ENCODE measurements at regions of chr6 and their contacts with region 1.

Region 1: DNA sequence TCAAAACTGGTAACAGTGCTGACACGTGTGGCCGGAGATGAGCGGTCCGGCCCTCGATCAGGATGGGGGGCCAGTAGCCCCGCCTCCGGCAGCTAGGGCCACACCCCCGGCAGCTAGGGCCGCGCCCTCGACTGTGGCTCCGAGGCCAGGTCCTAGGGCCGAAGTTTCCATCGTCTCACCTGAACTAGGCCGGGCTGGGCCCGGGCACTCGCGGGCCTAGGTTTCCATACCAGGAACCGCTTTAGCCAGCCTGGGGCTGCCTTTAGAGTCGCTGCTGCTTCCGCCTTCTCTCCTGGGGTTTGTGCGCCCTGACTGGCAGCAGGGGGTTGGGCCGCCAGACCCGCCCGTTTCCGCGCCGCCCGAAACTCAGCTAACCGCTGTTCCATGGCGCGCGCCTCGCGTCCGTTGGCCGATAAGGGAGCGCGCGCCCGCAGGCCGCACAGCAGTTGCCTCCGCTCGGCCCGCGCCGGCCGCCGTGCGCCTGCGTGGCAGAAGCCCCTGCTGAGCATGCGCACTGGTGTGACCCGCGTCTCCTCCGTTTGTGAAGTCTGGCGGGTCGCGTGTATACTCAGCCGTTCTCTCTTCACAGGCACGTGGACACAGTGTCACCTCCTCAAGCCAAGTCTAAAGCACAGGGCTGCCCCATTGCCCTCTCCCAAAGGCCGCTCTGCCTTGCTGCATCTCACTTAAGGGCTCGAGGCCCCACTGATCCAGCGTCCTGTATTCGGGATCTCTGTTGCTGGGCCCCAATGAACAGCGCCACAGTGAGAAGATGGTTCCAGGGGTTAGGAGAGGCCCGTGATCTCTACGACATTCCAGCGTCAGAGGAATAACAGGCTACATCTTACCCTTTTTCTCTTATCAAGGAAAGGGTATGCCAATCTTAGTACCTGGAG is at the start of gene SAYSD1:
- DNase-seq: peak; percentile 80 to 98 (median 91)
- ATAC-seq: peak; percentile 79
- H3K4me3 ChIP-seq: peak within 1 kb of the TSS; percentile 64 to 71
- H3K4me3 Mint-ChIP-seq: peak within 1 kb of the TSS; percentile 96
- H3K27ac ChIP-seq: peak within 1 kb of the TSS; percentile 80 to 88
- H3K27ac Mint-ChIP-seq: peak within 1 kb of the TSS; percentile 98
- H3K4me1 ChIP-seq: peaks cover 45% of the 10 kb centered on the region
- H3K4me1 Mint-ChIP-seq: peaks cover 57% of the 10 kb centered on the region
- H3K27me3 ChIP-seq: no peaks in the 10 kb centered on the region
- H3K27me3 Mint-ChIP-seq: no peaks in the 10 kb centered on the region
- CTCF ChIP-seq: no peak
- total RNA-seq, gene SAYSD1: 21.8 to 24.3 TPM

Region 2: DNA sequence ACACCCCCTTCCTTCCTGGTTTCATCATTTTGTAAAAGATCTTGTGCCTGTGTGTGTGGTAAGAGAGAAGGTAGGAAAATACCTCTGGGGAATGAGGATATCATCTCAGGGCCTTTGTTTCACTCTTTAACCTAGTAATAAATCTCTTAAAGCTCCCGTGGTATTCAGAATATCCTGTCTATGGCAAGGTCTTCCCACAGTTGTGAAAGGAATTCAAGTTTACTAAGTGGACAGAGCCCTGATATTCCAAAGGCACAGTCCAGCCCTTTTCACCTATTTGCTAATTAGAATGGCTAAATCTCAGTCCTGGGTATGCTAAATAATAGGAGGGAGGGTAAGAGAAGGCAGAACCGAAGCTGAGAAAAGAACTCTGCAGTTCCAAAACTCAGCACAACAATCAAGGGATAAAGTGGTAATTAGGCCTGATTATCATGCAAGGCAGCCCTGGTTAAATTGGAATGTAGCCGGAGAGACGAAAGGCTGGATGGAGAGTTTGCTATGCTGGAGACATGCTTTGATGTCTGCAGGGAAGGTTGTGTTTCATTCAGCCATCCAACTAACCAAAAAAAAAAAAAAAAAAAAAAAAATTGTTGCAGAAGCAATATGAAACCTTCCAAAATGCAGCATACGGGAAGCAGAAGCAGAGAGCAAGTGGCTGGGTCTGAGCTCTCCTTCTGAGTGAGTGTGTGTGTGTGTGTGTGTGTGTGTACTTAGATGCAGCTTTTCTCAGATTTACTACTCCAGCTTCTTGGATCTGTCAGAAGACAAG is 1973.5 kb before region 1 on chr6:
- CTCF ChIA-PET with region 1: no interaction called
- POLR2A ChIA-PET with region 1: no interaction called
- intact Hi-C with region 1: no loop called
- DNase-seq: no peak
- ATAC-seq: no peak
- H3K4me3 ChIP-seq: no peak overlapping the region
- H3K4me3 Mint-ChIP-seq: no peak overlapping the region
- H3K27ac ChIP-seq: no peak overlapping the region
- H3K27ac Mint-ChIP-seq: peak overlapping the region; percentile 30
- H3K4me1 ChIP-seq: no peaks in the 10 kb centered on the region
- H3K4me1 Mint-ChIP-seq: peaks cover 11% of the 10 kb centered on the region
- H3K27me3 ChIP-seq: no peaks in the 10 kb centered on the region
- H3K27me3 Mint-ChIP-seq: no peaks in the 10 kb centered on the region
- CTCF ChIP-seq: no peak

Region 3: GRCh38 chr6:38702558-38703397 is 412.2 kb before region 1 on chr6 and contains the start of gene GLO1:
- CTCF ChIA-PET with region 1: no interaction called
- POLR2A ChIA-PET with region 1: no interaction called
- intact Hi-C with region 1: loop called (anchors 2 to 10 kb)
- DNase-seq: peak; percentile 91 to 98 (median 96)
- ATAC-seq: peak; percentile 99
- H3K4me3 ChIP-seq: peak within 1 kb of the TSS; percentile 64 to 88
- H3K4me3 Mint-ChIP-seq: peak within 1 kb of the TSS; percentile 83
- H3K27ac ChIP-seq: peak within 1 kb of the TSS; percentile 78 to 90
- H3K27ac Mint-ChIP-seq: peak within 1 kb of the TSS; percentile 92
- H3K4me1 ChIP-seq: no peaks in the 10 kb centered on the region
- H3K4me1 Mint-ChIP-seq: peaks cover 24% of the 10 kb centered on the region
- H3K27me3 ChIP-seq: no peaks in the 10 kb centered on the region
- H3K27me3 Mint-ChIP-seq: peaks cover 6% of the 10 kb centered on the region
- CTCF ChIP-seq: no peak
- total RNA-seq, gene GLO1: 23.1 to 23.9 TPM

Region 4: GRCh38 chr6:39225946-39226437 is 111.0 kb after region 1 on chr6:
- CTCF ChIA-PET with region 1: no interaction called
- POLR2A ChIA-PET with region 1: interaction called, 3 read pairs
- intact Hi-C with region 1: loop called in 1 of 2 experiments (anchors 2 kb)
- DNase-seq: peak in 8 of 9 experiments; percentile 29 to 77 (median 50)
- ATAC-seq: peak; percentile 28
- H3K4me3 ChIP-seq: no peak overlapping the region
- H3K4me3 Mint-ChIP-seq: peak overlapping the region; percentile 69
- H3K27ac ChIP-seq: peak overlapping the region in 1 of 2 experiments; percentile 63
- H3K27ac Mint-ChIP-seq: peak overlapping the region; percentile 68
- H3K4me1 ChIP-seq: peaks cover 39% of the 10 kb centered on the region
- H3K4me1 Mint-ChIP-seq: peaks cover 48% of the 10 kb centered on the region
- H3K27me3 ChIP-seq: no peaks in the 10 kb centered on the region
- H3K27me3 Mint-ChIP-seq: no peaks in the 10 kb centered on the region
- CTCF ChIP-seq: no peak